ENCODE measurements at regions of chr15 and their contacts with region 1.

Region 1: DNA sequence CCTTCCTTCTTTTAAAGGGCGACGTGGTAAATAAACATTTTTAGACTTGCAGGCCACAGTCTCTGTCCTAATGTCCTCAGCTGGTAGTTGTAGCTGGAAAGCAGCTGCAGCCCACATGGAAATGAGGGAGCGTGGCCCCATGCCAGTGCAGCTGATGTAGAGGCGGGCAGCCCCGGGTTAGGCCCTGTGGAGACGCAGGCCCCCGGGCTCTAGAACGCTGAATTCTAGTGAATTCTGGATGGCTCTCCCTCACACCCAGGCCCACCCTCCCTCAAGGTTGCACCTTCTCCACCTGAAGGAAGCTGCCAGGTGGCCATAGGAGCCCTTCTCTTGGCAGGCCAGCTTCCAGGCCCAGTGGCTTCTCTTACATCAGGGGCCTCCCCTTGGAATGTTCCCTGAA is 52.2 kb downstream of the PGPEP1L start:
- DNase-seq: no peak
- H3K4me3 ChIP-seq: no peak overlapping the region
- H3K27ac ChIP-seq: no peak overlapping the region
- H3K4me1 ChIP-seq: no peaks in the 10 kb centered on the region
- H3K27me3 ChIP-seq: no peaks in the 10 kb centered on the region
- CTCF ChIP-seq: no peak

Region 2: DNA sequence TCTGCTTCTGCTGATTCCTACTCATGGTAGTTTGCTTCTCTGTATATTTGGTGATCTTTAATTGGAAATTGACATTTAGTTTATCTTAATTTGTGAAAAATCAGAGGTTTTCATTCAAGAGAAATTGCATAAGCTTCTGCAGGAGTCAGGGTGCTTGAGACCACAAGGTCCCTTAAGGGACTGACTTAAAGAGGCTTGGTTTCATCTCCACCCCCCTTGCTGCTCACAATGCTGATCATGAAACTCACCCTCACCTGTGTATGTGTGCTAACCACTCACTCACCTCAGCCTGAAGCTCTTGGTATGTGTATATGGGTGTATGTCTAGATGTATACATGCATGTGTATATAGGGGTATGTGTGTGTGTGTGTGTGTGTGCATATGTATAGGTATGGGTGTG is 40.8 kb after region 1 on chr15:
- CTCF ChIA-PET with region 1: no interaction called
- dilution Hi-C with region 1: loop called (anchors 5 kb)
- in situ Hi-C with region 1: no loop called
- intact Hi-C with region 1: no loop called
- DNase-seq: no peak
- H3K4me3 ChIP-seq: no peak overlapping the region
- H3K27ac ChIP-seq: no peak overlapping the region
- H3K4me1 ChIP-seq: no peaks in the 10 kb centered on the region
- H3K27me3 ChIP-seq: no peaks in the 10 kb centered on the region
- CTCF ChIP-seq: no peak